Activated B cell treated with CpG ODN at 0.5 μM for 24 hours (primary cell): ENCODE measurements at regions of chr1 and their contacts with region 1.

Region 1: GRCh38 chr1:45550401-45551351 is at the start of gene AKR1A1:
- DNase-seq: peak; percentile 91
- ATAC-seq: peak; percentile 91
- H3K4me3 Mint-ChIP-seq: peak within 1 kb of the TSS; percentile 99
- H3K27ac Mint-ChIP-seq: peak within 1 kb of the TSS; percentile 95
- H3K4me1 Mint-ChIP-seq: peaks cover 35% of the 10 kb centered on the region
- H3K27me3 Mint-ChIP-seq: no peaks in the 10 kb centered on the region
- CTCF ChIP-seq: no peak
- total RNA-seq, gene AKR1A1: 215 and 218 TPM in 2 replicates

Region 2: GRCh38 chr1:45569962-45570581 is 19.4 kb after region 1 on chr1:
- CTCF ChIA-PET with region 1: interaction called, 23 read pairs
- POLR2A ChIA-PET with region 1: interaction called, 8 read pairs
- intact Hi-C with region 1: loop called (anchors 1 kb)
- DNase-seq: peak; percentile 48
- ATAC-seq: peak; percentile 98
- H3K4me3 Mint-ChIP-seq: no peak overlapping the region
- H3K27ac Mint-ChIP-seq: no peak overlapping the region
- H3K4me1 Mint-ChIP-seq: no peaks in the 10 kb centered on the region
- H3K27me3 Mint-ChIP-seq: no peaks in the 10 kb centered on the region
- CTCF ChIP-seq: peak; percentile 17

Region 3: GRCh38 chr1:45739137-45739536 is 188.5 kb after region 1 on chr1:
- CTCF ChIA-PET with region 1: no interaction called
- POLR2A ChIA-PET with region 1: no interaction called
- intact Hi-C with region 1: no loop called
- DNase-seq: no peak
- ATAC-seq: no peak
- H3K4me3 Mint-ChIP-seq: no peak overlapping the region
- H3K27ac Mint-ChIP-seq: no peak overlapping the region
- H3K4me1 Mint-ChIP-seq: peaks cover 10% of the 10 kb centered on the region
- H3K27me3 Mint-ChIP-seq: no peaks in the 10 kb centered on the region
- CTCF ChIP-seq: no peak

Region 4: GRCh38 chr1:46036894-46037839 is 486.5 kb after region 1 on chr1:
- CTCF ChIA-PET with region 1: no interaction called
- POLR2A ChIA-PET with region 1: no interaction called
- intact Hi-C with region 1: no loop called
- DNase-seq: peak; percentile 82
- ATAC-seq: peak; percentile 82
- H3K4me3 Mint-ChIP-seq: no peak overlapping the region
- H3K27ac Mint-ChIP-seq: no peak overlapping the region
- H3K4me1 Mint-ChIP-seq: peaks cover 11% of the 10 kb centered on the region
- H3K27me3 Mint-ChIP-seq: no peaks in the 10 kb centered on the region
- CTCF ChIP-seq: peak; percentile 91